ENCODE measurements at regions of chr15 and their contacts with region 1.

Region 1: DNA sequence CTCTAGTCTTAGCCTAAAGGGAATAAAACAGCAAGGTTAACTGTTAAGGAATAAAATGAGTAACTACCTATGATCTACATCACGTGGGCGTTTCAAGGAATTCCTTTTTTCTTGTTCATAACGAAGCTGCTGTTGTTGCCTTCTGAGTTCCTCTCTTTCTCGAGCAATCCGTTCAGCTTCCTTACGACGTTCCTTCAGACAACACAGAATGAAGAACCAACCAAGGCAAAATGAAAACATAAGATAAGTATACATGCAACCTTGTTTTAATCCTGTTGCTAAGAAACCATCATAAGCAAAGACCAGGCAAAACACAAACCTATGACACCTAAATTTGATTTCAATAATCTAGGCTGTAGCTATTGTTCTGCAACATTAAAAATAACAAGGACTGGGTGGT is 44.1 kb downstream of the SLTM start:
- DNase-seq: no peak
- ATAC-seq: no peak
- H3K4me3 ChIP-seq: no peak overlapping the region
- H3K27ac ChIP-seq: no peak overlapping the region
- H3K4me1 ChIP-seq: no peaks in the 10 kb centered on the region
- H3K27me3 ChIP-seq: no peaks in the 10 kb centered on the region

Region 2: DNA sequence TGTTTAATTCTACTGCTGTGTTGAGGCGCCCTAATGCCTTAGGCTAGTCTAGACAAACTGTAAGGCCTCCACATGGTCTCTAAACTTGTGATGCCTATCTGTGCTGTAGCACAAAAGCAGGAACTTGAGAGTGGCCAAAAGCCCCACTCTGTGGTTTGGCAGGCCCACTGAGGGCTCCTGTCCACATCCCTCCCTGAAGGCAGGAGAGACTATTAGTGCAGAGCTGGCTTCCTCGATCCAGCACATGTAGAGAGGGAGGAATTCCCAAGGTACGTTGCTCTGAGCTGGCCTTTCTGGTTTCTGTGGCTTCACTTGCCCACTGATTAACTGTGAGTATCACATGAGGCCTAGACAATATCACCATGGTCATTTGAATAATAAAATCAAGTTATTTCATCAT is 1092.3 kb before region 1 on chr15:
- intact Hi-C with region 1: no loop called
- DNase-seq: no peak
- ATAC-seq: peak in 1 of 2 donors; percentile 26
- H3K4me3 ChIP-seq: no peak overlapping the region
- H3K27ac ChIP-seq: peak overlapping the region; percentile 43
- H3K4me1 ChIP-seq: peaks cover 3% of the 10 kb centered on the region
- H3K27me3 ChIP-seq: no peaks in the 10 kb centered on the region

Region 3: DNA sequence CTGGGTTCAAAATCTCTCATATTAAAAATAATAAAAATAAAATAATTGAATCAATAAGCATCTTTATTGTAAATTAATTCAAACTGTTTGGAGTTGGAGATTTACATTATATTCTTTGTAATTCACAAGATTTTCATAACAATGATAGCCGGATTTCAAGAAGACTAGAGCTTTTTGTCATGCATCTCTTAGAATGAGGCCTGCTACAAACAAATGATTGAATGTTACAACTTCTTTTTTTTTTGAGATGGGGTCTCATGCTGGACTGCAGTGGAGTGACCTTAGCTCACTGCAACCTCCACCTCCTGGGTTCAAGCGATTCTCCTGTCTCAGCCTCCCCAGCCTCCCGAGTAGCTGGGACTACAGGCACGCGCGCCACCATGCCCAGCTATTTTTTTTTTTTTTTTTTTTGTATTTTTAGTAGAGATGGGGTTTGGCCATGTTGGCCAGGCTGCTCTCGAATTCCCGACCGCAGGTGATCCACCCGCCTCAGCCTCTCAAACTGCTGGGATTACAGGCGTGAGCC is 40.6 kb after region 1 on chr15:
- intact Hi-C with region 1: loop called in 1 of 4 experiments (anchors 2 kb)
- DNase-seq: no peak
- ATAC-seq: no peak
- H3K4me3 ChIP-seq: no peak overlapping the region
- H3K27ac ChIP-seq: no peak overlapping the region
- H3K4me1 ChIP-seq: no peaks in the 10 kb centered on the region
- H3K27me3 ChIP-seq: no peaks in the 10 kb centered on the region